Activated CD4-positive, alpha-beta memory T cell treated with anti-CD3 and anti-CD28 coated beads for 36 hours (primary cell): ENCODE measurements at regions of chr3 and their contacts with region 1.

Region 1: GRCh38 chr3:160399125-160400029 is at the starts of genes IFT80 and SMC4:
- DNase-seq: peak; percentile 98
- H3K4me3 Mint-ChIP-seq: peak within 1 kb of the TSS; percentile 98
- H3K27ac Mint-ChIP-seq: peak within 1 kb of the TSS; percentile 98
- H3K4me1 Mint-ChIP-seq: peaks cover 44% of the 10 kb centered on the region
- H3K27me3 Mint-ChIP-seq: peaks cover 4% of the 10 kb centered on the region
- total RNA-seq, gene IFT80: 13.4 to 13.9 TPM
- total RNA-seq, gene SMC4: 143 to 157 TPM

Region 2: DNA sequence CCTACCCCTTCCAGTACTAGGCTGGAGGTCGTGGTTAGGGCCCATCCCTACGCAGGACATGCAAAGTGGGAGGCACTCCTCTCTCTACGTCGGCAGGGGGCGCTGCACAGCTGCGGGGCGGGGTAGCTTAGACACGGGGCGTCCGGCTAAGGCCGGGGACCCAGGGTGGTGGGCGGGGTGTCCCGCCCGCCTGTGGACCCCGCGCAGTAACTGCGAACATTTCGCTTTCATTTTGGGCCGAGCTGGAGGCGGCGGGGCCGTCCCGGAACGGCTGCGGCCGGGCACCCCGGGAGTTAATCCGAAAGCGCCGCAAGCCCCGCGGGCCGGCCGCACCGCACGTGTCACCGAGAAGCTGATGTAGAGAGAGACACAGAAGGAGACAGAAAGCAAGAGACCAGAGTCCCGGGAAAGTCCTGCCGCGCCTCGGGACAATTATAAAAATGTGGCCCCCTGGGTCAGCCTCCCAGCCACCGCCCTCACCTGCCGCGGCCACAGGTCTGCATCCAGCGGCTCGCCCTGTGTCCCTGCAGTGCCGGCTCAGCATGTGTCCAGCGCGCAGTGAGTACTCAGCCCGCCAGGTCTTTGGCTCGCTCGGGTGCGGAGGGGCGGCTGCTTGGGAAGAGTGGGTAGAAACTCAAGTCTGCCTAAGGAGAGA is 410.6 kb before region 1 on chr3 and contains the start of gene IL12A:
- CTCF ChIA-PET with region 1: no interaction called
- POLR2A ChIA-PET with region 1: interaction called, 4 read pairs
- intact Hi-C with region 1: loop called (anchors 5 kb)
- DNase-seq: peak; percentile 87
- H3K4me3 Mint-ChIP-seq: peak within 1 kb of the TSS; percentile 62
- H3K27ac Mint-ChIP-seq: no peak within 1 kb of the TSS
- H3K4me1 Mint-ChIP-seq: peaks cover 17% of the 10 kb centered on the region
- H3K27me3 Mint-ChIP-seq: no peaks in the 10 kb centered on the region
- total RNA-seq, gene IL12A: not detected

Region 3: DNA sequence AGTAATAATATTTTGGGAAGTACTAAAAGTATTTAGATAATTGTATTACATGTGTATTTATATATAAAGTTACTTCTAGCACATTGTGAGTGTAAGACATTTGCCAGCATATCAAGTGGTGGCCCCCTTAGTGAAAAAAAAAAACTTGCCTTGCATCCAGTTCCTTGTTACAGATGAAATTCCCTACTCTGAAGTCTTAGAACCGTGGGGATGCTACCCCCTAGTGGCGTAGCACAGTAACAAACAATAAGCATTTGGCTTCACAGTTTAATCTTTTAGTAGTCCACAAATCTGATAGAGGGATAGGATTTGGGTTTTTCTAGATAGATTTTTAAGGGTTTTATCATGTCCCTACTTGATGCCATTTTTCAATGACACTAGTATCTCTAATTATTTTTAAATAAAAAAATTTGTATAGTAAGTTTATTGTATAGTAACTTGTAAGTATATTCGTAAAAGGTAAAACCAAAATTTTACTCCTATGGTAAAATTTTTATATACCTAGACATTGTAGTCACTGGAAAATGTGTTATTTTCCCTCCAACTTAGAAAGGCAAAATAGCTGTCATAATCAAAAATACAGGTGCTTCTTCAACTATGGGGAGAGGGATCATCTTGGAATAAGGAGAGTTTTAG is 14.4 kb after region 1 on chr3:
- CTCF ChIA-PET with region 1: interaction called, 10 read pairs
- POLR2A ChIA-PET with region 1: interaction called, 10 read pairs
- intact Hi-C with region 1: loop called (anchors 1 kb)
- DNase-seq: peak; percentile 71
- H3K4me3 Mint-ChIP-seq: no peak overlapping the region
- H3K27ac Mint-ChIP-seq: peak overlapping the region; percentile 33
- H3K4me1 Mint-ChIP-seq: peaks cover 16% of the 10 kb centered on the region
- H3K27me3 Mint-ChIP-seq: no peaks in the 10 kb centered on the region

Region 4: GRCh38 chr3:160460033-160460432 is 60.7 kb after region 1 on chr3:
- CTCF ChIA-PET with region 1: no interaction called
- POLR2A ChIA-PET with region 1: no interaction called
- intact Hi-C with region 1: no loop called
- DNase-seq: no peak
- H3K4me3 Mint-ChIP-seq: no peak overlapping the region
- H3K27ac Mint-ChIP-seq: no peak overlapping the region
- H3K4me1 Mint-ChIP-seq: no peaks in the 10 kb centered on the region
- H3K27me3 Mint-ChIP-seq: peaks cover 12% of the 10 kb centered on the region

Region 5: DNA sequence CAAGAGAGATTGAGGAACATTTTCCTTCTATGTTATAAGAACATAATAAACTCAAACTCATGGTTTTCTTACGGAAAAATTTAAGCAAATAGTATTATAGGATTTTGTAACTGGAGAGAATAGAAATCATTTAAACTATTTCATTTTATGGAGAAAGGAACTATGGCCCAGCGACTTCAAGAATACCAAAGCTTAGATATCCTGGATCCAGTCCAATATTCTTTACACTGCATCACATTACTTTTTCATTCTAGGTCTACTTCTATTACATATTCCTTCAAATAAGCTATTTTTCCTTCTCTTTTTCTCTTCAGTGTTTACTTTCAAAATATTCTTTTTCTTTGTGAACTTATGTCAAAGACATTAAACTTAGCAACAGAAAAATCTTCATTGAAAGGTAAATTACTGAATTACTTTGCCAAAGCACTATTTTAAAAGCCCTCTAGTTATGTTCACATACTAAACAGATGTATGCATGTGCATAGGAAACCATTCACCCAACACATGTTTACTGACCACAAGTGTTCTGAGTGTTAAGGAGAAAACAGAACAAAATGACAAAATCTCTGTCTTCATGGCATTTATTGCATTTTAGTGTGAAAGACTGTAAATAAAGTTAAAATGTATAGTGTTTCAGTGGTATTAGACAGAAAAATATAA is 145.6 kb after region 1 on chr3:
- CTCF ChIA-PET with region 1: no interaction called
- POLR2A ChIA-PET with region 1: no interaction called
- intact Hi-C with region 1: no loop called
- DNase-seq: no peak
- H3K4me3 Mint-ChIP-seq: no peak overlapping the region
- H3K27ac Mint-ChIP-seq: no peak overlapping the region
- H3K4me1 Mint-ChIP-seq: peaks cover 73% of the 10 kb centered on the region
- H3K27me3 Mint-ChIP-seq: no peaks in the 10 kb centered on the region

Region 6: DNA sequence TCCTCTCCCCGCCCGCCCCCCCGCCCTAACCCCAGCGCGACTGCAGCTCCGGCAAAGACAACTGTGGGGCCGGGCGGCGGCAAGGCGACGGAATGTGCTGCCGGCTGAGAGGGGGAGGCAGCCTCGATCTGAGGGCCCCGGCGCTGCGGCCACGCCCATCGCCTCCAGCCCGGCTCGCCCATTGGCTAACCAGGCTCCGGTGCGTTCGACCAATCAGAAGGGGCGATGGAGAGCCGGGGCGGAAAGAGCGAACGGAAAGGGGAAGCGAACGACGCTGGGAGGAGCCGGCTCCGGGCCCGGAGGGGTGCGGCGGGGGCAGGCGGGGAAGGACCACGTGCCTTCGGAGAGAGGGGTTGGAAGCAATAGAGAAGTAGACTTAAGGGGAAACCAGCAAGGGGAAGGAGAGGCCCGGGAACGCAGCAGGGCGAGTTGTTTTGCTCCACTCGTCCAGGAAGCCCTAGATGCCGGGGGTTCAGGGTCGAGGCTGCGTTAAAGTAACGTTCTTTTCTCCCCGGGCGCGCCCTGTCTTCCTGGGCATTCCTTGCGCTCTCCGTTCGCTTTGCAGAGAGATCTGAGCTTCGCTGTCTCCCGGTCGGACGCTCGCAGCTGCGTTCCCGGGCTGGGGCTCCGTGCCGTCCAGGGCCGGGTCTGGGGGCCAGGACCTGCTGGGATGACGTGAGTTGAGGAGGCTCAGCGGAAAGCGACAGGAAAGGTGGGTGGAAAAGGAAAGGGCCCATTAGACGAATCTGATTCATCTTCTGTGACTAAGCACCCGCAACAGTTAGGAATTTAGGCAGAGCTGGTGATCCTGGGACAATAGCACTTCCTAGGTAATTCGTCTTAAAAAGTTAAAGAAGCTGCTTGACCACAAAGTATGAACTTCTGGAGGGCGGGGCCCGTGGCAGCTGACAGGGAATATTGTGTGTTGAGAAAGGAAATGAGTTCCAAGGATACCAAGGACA is 166.3 kb after region 1 on chr3 and contains the start of gene KPNA4:
- CTCF ChIA-PET with region 1: no interaction called
- POLR2A ChIA-PET with region 1: no interaction called
- intact Hi-C with region 1: loop called (anchors 1 kb)
- DNase-seq: peak; percentile 97
- H3K4me3 Mint-ChIP-seq: peak within 1 kb of the TSS; percentile 93
- H3K27ac Mint-ChIP-seq: peak within 1 kb of the TSS; percentile 97
- H3K4me1 Mint-ChIP-seq: peaks cover 45% of the 10 kb centered on the region
- H3K27me3 Mint-ChIP-seq: no peaks in the 10 kb centered on the region
- total RNA-seq, gene KPNA4: 44.9 to 48.4 TPM